PC-9 (cell line): ENCODE measurements at regions of chrX and their contacts with region 1.

Region 1: DNA sequence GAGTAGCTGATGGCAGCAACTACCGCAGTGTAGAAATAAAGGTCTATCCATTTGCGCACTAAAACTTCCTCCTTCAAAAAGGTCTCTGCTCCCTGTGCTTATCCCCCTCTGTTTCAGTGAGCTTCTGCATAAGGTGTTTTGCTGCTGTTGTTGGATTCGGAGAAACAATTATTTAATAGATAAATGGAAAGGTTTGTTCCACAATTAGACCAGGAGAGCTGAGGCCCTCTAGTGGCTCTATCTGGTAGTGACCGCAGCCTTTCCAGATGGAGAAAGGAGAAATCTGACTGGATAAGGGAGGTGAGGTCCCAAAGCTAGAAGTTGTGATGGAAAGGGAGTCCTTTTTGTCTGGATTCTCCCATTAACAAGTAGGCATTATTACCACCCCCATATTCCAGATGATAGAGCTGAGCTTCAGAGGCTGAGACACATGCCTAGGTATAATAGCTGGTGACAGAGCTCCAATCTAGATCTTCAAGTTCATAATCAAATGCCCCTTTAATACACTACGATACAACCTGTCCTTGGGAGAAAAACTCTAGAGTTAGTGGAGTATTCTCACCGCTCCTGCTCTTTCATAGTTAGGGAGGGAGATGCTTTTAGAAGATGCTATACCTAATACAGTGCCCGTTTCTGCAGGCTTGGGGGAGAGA is 5.1 kb upstream of the GABRQ start:
- DNase-seq: peak; percentile 49 to 62
- H3K4me3 ChIP-seq: no peak overlapping the region
- H3K27ac ChIP-seq: no peak overlapping the region
- H3K4me1 ChIP-seq: no peaks in the 10 kb centered on the region
- H3K27me3 ChIP-seq: no peaks in the 10 kb centered on the region
- CTCF ChIP-seq: peak; percentile 98

Region 2: DNA sequence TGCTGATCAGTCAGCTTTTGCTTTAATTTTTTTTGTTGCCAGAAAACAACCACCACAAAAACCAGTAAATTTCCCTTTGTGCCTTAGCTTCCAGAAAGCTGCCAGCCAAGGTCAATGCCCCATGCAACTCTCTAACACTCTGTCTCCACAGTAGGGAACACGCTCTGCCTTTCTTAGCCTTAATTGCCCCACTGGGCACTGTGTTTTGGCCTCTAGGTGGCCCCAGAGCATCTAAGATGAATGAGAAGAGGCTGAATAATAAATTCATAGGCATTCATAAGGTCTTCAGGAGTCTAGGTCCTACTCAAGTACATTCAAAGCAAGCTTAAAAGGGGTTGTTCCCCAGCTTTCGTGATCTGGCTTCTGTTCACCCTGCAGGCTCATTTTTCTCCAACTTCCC is 1126.8 kb before region 1 on chrX:
- CTCF ChIA-PET with region 1: no interaction called
- POLR2A ChIA-PET with region 1: no interaction called
- intact Hi-C with region 1: loop called (anchors 5 kb)
- DNase-seq: peak in 1 of 2 experiments; percentile 22
- H3K4me3 ChIP-seq: no peak overlapping the region
- H3K27ac ChIP-seq: no peak overlapping the region
- H3K4me1 ChIP-seq: no peaks in the 10 kb centered on the region
- H3K27me3 ChIP-seq: peaks cover 36% of the 10 kb centered on the region
- CTCF ChIP-seq: peak; percentile 74

Region 3: GRCh38 chrX:152025656-152026440 is 606.7 kb before region 1 on chrX:
- CTCF ChIA-PET with region 1: no interaction called
- POLR2A ChIA-PET with region 1: no interaction called
- intact Hi-C with region 1: no loop called
- DNase-seq: peak in 1 of 2 experiments; percentile 72
- H3K4me3 ChIP-seq: no peak overlapping the region
- H3K27ac ChIP-seq: no peak overlapping the region
- H3K4me1 ChIP-seq: peaks cover 11% of the 10 kb centered on the region
- H3K27me3 ChIP-seq: no peaks in the 10 kb centered on the region
- CTCF ChIP-seq: no peak

Region 4: GRCh38 chrX:152412105-152412504 is 220.5 kb before region 1 on chrX:
- CTCF ChIA-PET with region 1: no interaction called
- POLR2A ChIA-PET with region 1: no interaction called
- intact Hi-C with region 1: no loop called
- DNase-seq: no peak
- H3K4me3 ChIP-seq: no peak overlapping the region
- H3K27ac ChIP-seq: no peak overlapping the region
- H3K4me1 ChIP-seq: no peaks in the 10 kb centered on the region
- H3K27me3 ChIP-seq: no peaks in the 10 kb centered on the region
- CTCF ChIP-seq: no peak

Region 5: DNA sequence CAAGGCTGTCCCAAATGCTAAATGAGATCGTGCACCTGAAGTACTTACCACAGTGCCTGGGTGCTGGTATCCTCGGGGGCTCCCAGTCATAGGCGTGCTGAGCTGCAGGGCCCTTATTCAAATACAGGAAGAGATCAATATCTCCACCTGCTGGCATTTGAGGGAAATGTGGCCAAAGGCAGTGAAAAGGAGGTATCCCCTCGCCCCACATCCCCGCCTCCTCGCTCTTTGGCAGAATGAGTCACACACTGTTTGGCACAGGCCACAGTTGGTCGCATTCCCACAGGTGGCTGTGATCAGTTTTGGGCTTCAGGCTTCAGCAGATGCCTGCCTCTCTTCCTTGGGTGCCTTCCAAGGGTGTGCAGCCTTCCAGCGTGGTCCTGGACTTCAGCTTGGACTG is 293.7 kb after region 1 on chrX:
- CTCF ChIA-PET with region 1: no interaction called
- POLR2A ChIA-PET with region 1: no interaction called
- intact Hi-C with region 1: loop called (anchors 5 kb)
- DNase-seq: peak; percentile 89 to 93
- H3K4me3 ChIP-seq: no peak overlapping the region
- H3K27ac ChIP-seq: no peak overlapping the region
- H3K4me1 ChIP-seq: peaks cover 11% of the 10 kb centered on the region
- H3K27me3 ChIP-seq: no peaks in the 10 kb centered on the region
- CTCF ChIP-seq: peak; percentile 90

Region 6: GRCh38 chrX:152936357-152936756 is 303.8 kb after region 1 on chrX:
- CTCF ChIA-PET with region 1: no interaction called
- POLR2A ChIA-PET with region 1: no interaction called
- intact Hi-C with region 1: no loop called
- DNase-seq: no peak
- H3K4me3 ChIP-seq: no peak overlapping the region
- H3K27ac ChIP-seq: no peak overlapping the region
- H3K4me1 ChIP-seq: no peaks in the 10 kb centered on the region; the same call in 1 of the 2 replicates
- H3K27me3 ChIP-seq: no peaks in the 10 kb centered on the region
- CTCF ChIP-seq: no peak